Caco-2 (cell line): ENCODE measurements at regions of chr12 and their contacts with region 1.

Region 1: GRCh38 chr12:53984901-53985709 is at the start of gene HOXC10:
- DNase-seq: peak; percentile 90 to 92
- H3K4me3 ChIP-seq: peak within 1 kb of the TSS; percentile 52
- H3K4me3 Mint-ChIP-seq: peak within 1 kb of the TSS; percentile 77
- H3K27ac Mint-ChIP-seq: peak within 1 kb of the TSS; percentile 81
- H3K4me1 ChIP-seq: peaks cover 41% of the 10 kb centered on the region
- H3K4me1 Mint-ChIP-seq: peaks cover 29% of the 10 kb centered on the region
- H3K27me3 ChIP-seq: no peaks in the 10 kb centered on the region
- H3K27me3 Mint-ChIP-seq: no peaks in the 10 kb centered on the region
- CTCF ChIP-seq: peak; percentile 77 to 83
- total RNA-seq, gene HOXC10: 4.0 and 4.5 TPM in 2 replicates

Region 2: GRCh38 chr12:53766881-53767280 is 218.2 kb before region 1 on chr12:
- CTCF ChIA-PET with region 1: no interaction called
- POLR2A ChIA-PET with region 1: no interaction called
- intact Hi-C with region 1: loop called (anchors 2 kb)
- DNase-seq: no peak
- H3K4me3 ChIP-seq: no peak overlapping the region
- H3K4me3 Mint-ChIP-seq: no peak overlapping the region
- H3K27ac Mint-ChIP-seq: no peak overlapping the region
- H3K4me1 ChIP-seq: no peaks in the 10 kb centered on the region
- H3K4me1 Mint-ChIP-seq: no peaks in the 10 kb centered on the region
- H3K27me3 ChIP-seq: peaks cover 1% of the 10 kb centered on the region
- H3K27me3 Mint-ChIP-seq: peaks cover 21% of the 10 kb centered on the region
- CTCF ChIP-seq: no peak

Region 3: DNA sequence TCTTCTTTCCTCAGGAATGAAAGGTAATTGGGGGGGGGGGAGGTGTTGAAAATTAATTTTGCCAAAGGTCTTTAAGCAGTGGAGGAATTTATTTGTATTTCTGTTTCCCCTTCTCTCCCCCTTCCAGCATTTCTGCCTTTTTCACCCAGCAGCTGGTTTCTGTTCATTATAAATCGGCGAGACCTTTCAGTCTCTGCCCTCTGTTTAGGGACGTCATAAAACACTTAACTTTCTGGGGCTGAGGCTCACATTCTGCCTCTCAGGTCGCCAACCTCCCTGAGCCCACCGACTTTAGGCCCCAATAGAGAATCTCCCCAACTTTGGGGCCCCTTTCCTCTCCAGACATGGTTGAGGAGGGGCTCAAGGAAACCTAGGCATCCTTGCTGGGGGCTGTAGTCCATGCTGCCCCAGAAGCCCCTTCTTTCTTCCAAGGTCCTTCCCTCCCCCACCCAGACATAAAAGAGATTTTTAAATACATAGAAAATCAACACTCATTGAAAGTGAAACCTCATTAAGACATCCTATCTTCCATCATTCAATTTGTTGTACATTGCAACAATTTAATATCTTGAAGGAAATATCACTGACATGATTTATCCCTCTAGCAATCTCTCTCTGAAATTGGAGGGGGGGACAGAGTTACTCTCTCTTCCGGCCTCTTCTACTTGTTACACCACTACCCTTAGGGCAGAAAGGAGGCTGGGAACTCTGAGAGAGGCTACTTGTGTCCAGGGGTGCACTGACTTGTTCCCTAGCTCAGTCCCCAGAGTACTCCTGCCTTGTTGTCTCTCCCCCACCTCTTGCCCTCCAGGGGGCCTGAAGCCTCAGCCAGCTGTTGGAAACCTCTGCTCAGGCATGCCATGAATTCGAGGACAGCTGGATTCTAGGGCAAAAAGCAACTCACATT is 40.6 kb after region 1 on chr12:
- CTCF ChIA-PET with region 1: no interaction called
- POLR2A ChIA-PET with region 1: no interaction called
- intact Hi-C with region 1: no loop called
- DNase-seq: no peak
- H3K4me3 ChIP-seq: no peak overlapping the region
- H3K4me3 Mint-ChIP-seq: no peak overlapping the region
- H3K27ac Mint-ChIP-seq: no peak overlapping the region
- H3K4me1 ChIP-seq: no peaks in the 10 kb centered on the region
- H3K4me1 Mint-ChIP-seq: peaks cover 19% of the 10 kb centered on the region
- H3K27me3 ChIP-seq: no peaks in the 10 kb centered on the region
- H3K27me3 Mint-ChIP-seq: no peaks in the 10 kb centered on the region
- CTCF ChIP-seq: no peak

Region 4: DNA sequence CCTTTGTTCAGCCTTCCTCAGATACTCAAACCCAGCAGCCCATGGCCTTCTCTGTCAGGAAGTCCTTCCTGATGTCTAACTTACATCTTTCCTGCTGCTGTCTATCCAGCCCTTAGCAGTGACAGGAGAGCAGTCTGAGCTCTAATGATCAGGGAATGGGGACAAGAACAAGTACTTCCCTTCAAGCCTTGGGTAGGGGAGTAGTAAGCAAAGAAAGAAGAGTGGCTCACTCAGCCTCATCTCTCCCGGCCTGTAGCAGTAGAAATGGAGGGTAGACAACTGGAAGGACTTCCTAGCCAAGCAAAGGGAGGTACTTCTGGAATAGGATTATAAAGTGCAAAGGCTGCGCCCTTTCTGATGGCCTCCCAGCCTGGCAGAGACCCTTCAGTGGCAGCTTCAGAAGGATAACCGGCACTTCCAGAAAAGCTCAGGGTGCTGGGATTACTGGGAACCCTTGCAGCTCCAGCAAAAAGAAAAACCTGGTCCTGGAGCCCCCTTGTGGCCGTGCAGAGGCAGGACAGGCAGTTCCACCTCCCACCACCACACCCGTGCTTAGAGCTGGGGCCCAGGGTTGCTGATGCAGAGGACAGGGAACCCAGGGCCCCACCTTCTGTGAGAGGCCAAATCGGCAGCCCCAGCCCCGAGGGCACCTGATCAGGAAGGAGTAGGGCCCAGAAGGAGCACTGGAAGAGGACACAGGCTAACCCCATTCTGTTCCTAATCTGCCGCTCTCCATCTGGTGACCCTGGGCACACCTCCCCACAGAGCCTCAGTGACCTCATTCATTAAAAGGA is 216.1 kb after region 1 on chr12:
- CTCF ChIA-PET with region 1: interaction called, 24 read pairs
- POLR2A ChIA-PET with region 1: no interaction called
- intact Hi-C with region 1: loop called (anchors 1 kb)
- DNase-seq: peak; percentile 84 to 90
- H3K4me3 ChIP-seq: no peak overlapping the region
- H3K4me3 Mint-ChIP-seq: no peak overlapping the region
- H3K27ac Mint-ChIP-seq: no peak overlapping the region
- H3K4me1 ChIP-seq: no peaks in the 10 kb centered on the region
- H3K4me1 Mint-ChIP-seq: peaks cover 8% of the 10 kb centered on the region
- H3K27me3 ChIP-seq: no peaks in the 10 kb centered on the region
- H3K27me3 Mint-ChIP-seq: no peaks in the 10 kb centered on the region
- CTCF ChIP-seq: peak; percentile 93 to 97

Region 5: DNA sequence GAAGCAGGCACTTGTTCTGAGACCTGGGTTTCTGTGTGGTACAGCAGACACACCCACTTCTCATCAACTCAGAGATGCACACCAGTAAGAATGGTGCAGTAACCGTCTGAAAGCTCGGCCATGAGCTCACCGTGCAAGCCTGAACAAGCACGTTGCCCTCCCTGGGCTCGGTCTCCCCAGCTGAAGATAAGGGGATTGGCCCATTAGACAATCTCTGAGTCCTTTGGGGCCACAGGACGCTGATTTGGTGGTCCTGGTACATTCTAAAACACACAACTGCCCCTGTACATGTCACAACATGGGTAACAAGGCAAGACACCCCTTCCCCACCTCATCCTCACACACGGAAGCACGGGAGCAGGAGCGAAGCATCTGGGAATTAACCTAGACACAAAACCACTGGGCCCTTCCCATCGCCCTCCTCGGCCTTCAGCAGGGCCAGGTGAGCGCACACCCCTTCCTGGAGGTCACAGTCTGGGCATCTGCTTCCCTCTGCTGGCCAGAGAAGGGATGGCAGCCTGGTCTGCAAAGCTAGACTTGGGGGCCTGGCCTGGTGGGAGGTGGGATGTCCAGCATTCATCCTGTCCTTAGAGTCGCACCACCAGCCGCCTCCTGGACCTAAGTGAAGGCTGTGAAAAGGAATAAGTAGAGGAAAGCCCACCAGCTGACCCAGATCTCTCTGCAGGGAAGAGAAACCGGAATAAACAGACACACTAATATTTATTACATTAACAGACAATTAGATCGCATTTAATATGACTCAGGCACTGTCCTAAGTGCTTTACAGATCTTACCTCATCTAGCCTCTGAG is 222.6 kb after region 1 on chr12:
- CTCF ChIA-PET with region 1: interaction called, 15 read pairs
- POLR2A ChIA-PET with region 1: no interaction called
- intact Hi-C with region 1: no loop called
- DNase-seq: peak; percentile 86 to 91
- H3K4me3 ChIP-seq: no peak overlapping the region
- H3K4me3 Mint-ChIP-seq: no peak overlapping the region
- H3K27ac Mint-ChIP-seq: no peak overlapping the region
- H3K4me1 ChIP-seq: peaks cover 7% of the 10 kb centered on the region; the same call in 1 of the 2 replicates
- H3K4me1 Mint-ChIP-seq: peaks cover 7% of the 10 kb centered on the region
- H3K27me3 ChIP-seq: no peaks in the 10 kb centered on the region
- H3K27me3 Mint-ChIP-seq: no peaks in the 10 kb centered on the region
- CTCF ChIP-seq: peak; percentile 92 to 94

Region 6: DNA sequence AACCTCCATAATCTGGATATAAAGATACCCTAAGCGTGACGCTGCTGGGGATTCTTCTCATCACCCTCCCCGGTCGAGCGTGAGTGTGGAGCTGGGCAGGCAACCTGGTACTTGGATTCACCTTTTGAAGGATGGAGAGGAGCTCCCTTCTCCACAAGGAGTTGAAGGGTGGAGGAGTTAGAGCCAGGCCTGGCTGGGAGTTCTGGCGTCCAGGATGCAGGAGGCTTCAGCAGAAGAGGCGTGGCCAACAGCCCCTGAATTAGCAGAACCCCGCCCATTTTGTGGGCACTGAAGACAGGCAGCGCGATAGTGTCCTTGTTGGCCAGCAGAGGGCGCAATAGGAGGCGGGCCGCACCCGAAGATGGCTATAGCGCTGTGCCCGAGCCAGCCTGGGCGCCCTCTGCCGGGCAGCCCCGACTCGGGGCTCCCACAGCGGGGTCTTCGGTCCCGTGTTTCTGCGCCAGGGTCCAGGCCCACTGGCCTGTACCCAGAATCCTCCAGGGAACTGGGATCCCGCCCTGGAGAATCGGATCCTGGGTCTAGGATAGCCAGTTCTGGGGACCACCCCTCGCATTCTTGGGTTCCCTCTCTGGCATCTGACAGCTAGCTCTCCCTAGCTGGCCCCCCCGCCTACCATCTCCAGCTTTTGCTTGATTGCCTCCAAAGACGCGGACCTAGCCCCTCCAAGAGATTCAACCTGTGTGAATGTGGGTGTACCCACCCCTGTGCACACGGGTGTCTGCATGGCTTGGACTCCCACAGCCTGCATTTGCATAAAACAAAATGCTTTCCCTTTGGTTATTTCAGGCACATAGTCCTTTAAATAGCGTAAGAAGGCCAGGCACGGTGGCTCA is 229.7 kb after region 1 on chr12:
- CTCF ChIA-PET with region 1: interaction called, 6 read pairs
- POLR2A ChIA-PET with region 1: no interaction called
- intact Hi-C with region 1: loop called (anchors 1 kb)
- DNase-seq: peak; percentile 89 to 92
- H3K4me3 ChIP-seq: 0 out of 2 replicates have a peak overlapping the region, but pooled peaks have one; percentile 5
- H3K4me3 Mint-ChIP-seq: peak overlapping the region; percentile 42
- H3K27ac Mint-ChIP-seq: no peak overlapping the region
- H3K4me1 ChIP-seq: no peaks in the 10 kb centered on the region
- H3K4me1 Mint-ChIP-seq: no peaks in the 10 kb centered on the region
- H3K27me3 ChIP-seq: no peaks in the 10 kb centered on the region
- H3K27me3 Mint-ChIP-seq: no peaks in the 10 kb centered on the region
- CTCF ChIP-seq: peak; percentile 97 to 98